PC-3 (cell line): ENCODE measurements at regions of chr3 and their contacts with region 1.

Region 1: DNA sequence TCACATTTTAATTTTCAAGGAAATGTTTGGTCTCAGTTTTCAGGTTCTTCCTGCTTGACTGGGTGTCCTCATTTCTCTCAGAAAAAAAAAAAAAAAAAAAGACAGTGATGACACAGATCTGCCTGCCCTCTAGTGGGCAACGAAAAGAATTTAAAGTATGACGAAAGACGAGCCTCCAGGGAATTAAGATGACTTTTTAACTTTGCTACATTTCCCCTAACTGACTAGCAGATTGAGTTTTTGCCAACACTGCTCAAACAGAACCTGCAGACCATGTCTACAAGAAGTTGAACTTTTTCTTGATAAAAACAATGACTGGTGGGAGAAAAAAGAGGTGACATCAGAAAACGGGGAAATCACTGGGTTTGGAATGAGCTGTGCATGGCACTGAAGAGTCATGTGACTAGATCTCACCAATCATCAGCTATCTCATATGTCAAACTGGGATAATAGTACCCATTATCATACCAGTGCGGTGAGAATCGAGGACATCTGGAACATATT is 40.8 kb downstream of the EOMES start:
- DNase-seq: peak; percentile 82
- ATAC-seq: peak; percentile 54
- H3K4me3 ChIP-seq: peak overlapping the region; percentile 58
- H3K27ac ChIP-seq: peak overlapping the region; percentile 21
- H3K4me1 ChIP-seq: peaks cover 34% of the 10 kb centered on the region
- H3K27me3 ChIP-seq: no peaks in the 10 kb centered on the region
- CTCF ChIP-seq: peak; percentile 91

Region 2: GRCh38 chr3:27134165-27134796 is 547.0 kb before region 1 on chr3:
- CTCF ChIA-PET with region 1: interaction called, 3 read pairs
- POLR2A ChIA-PET with region 1: no interaction called
- intact Hi-C with region 1: loop called (anchors 2 kb)
- DNase-seq: peak; percentile 82
- ATAC-seq: peak; percentile 93
- H3K4me3 ChIP-seq: no peak overlapping the region
- H3K27ac ChIP-seq: no peak overlapping the region
- H3K4me1 ChIP-seq: no peaks in the 10 kb centered on the region
- H3K27me3 ChIP-seq: peaks cover 18% of the 10 kb centered on the region
- CTCF ChIP-seq: peak; percentile 93

Region 3: DNA sequence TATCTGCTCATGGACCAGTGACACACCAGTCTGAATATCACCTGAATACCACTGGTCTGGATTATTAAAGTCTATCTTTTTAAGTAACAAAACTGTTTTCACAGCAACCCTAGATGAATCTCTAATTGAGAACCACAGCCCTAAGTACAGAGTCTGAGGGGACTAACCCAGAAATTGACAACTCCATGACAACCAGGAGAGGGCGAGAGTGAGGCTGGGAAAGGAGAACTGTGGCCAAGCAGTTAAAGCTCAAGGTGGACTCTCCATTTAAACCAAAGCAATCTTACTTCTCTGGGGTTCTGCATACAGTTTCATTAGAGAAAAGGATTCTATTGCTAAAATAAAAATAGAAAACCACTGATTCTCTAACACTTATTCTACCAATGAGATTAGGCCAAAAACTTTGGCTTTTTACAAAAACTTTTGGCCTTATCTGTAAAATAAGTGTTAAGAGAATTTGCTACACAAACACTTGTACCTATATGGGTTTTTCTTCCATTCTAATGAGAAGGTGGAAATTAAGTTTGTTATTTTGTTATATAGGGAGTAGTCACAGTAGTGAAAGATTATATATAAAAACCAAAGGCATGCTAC is 323.5 kb before region 1 on chr3:
- CTCF ChIA-PET with region 1: interaction called, 13 read pairs
- POLR2A ChIA-PET with region 1: no interaction called
- intact Hi-C with region 1: loop called (anchors 1 kb)
- DNase-seq: peak; percentile 83
- ATAC-seq: peak; percentile 90
- H3K4me3 ChIP-seq: no peak overlapping the region
- H3K27ac ChIP-seq: no peak overlapping the region
- H3K4me1 ChIP-seq: peaks cover 13% of the 10 kb centered on the region
- H3K27me3 ChIP-seq: no peaks in the 10 kb centered on the region
- CTCF ChIP-seq: peak; percentile 87

Region 4: DNA sequence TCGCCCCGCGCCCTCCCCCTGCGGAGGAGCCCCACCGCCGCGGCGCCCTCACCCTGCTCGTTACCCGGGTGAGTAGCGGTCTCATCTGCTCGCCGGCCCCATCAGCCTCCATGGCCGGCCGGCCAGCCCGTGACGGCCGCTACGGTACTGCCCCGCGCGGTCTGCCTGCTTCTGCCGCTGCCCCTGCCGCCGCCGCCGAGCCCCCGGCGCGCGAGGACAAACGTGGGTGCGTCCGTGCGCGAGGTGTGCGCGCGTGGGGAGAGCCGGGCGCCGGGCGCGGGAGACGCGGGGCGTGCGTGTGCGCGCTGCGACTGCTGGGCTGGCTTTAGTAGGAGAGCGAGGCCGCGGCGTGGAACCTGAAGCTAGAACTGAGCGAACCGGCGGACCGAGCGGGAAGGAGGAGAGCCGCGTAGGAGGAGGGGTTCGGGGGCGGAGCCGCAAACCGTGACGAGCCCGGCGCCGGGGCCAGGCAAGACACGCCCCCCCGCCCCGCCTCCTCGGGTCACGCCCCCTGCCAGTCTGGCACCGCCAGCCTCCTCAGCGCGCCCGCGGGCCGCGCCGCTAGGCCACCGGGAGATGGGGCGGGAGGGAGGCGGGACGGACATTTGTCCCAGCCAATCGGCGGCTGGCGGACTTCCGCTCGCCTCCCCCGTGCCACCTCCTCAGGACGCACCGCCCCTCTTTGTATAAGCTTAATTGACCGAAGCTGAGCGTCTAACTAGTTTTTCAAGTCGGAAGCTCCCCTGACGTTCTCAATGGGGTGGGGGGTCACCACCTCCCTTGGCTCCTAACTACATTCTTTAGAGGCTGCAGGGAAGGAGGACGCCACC is 197.1 kb before region 1 on chr3 and contains the start of gene SLC4A7:
- CTCF ChIA-PET with region 1: interaction called, 3 read pairs
- POLR2A ChIA-PET with region 1: no interaction called
- intact Hi-C with region 1: loop called (anchors 1 kb)
- DNase-seq: peak; percentile 97
- ATAC-seq: peak; percentile 85
- H3K4me3 ChIP-seq: peak within 1 kb of the TSS; percentile 88
- H3K27ac ChIP-seq: peak within 1 kb of the TSS; percentile 59
- H3K4me1 ChIP-seq: peaks cover 33% of the 10 kb centered on the region
- H3K27me3 ChIP-seq: no peaks in the 10 kb centered on the region
- CTCF ChIP-seq: no peak
- total RNA-seq, gene SLC4A7: 56.0 and 59.7 TPM in 2 replicates

Region 5: DNA sequence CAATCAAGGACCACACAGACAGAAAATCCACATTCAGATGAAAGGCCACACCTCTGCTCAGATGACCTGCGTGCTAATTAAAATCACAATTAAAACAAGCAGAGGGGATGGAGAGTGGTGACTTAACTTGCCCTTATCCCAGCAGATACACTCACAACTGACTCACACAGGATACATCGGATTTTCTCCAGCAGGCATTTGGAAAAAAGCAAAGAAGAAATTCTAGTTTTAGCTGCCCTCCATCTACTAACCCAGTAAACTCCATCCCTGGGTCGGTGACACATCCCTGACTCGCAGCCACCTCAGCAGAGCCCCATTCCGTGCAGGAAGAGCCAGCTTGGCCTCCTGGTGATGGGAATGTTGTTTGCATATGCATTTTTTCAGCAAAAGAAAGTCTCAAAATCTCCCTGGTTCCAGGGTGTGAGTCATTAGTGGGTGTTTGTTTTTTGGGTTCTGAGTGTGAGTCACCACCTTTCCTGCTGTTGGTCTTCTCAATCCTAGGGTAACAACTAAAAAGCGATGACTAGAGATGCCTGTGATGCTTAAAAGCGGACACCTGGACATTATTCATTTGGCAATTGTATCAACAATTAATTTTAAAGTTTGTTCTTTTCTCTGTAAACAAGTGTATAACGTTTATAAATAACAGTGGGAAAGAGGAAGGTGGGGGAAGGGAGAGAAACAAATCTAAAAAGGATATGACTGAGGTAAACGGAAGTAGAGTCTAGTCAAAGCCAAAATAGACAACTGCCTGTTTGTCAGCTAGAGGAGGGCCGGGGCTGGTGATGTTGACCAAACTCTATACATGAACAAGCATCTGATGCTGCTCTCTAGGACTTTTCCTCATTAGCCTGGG is 147.4 kb before region 1 on chr3:
- CTCF ChIA-PET with region 1: interaction called, 7 read pairs
- POLR2A ChIA-PET with region 1: interaction called, 9 read pairs
- intact Hi-C with region 1: loop called (anchors 1 kb)
- DNase-seq: peak; percentile 99
- ATAC-seq: peak; percentile 85
- H3K4me3 ChIP-seq: peak overlapping the region; percentile 34; the same call in 1 of the 2 replicates
- H3K27ac ChIP-seq: peak overlapping the region; percentile 97
- H3K4me1 ChIP-seq: peaks cover 41% of the 10 kb centered on the region
- H3K27me3 ChIP-seq: no peaks in the 10 kb centered on the region
- CTCF ChIP-seq: peak; percentile 42; the same call in 1 of the 2 replicates

Region 6: DNA sequence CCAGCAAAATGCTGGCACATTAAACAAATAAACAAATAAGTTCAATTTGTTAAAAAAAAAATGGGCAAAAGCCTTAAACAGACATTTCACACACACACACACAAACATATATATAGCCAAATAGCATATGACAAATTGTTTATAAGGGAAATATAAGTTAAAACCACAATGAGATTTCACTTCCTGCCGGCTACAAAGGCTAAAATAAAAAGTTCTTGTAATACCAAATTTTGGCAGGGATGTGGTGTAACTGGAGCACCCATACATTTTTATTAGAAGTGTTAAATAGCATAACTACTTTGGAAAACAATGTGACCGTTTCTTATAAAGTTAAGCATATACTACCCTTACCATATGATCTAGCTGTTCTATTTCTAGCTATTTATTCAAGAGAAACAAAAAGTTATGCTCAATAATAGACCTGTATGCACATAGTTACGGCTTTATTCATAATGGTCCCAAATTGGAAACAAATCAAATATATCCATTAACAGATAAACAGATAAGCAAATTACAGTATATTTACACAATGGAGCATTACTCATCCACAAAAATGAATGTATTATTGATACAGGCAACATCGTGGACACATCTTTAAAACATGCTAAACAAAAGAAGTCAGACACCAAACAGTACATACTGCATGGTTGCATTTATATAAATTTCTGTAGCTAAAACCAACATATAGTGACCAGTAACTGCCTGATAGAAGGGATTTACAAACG is 53.1 kb before region 1 on chr3:
- CTCF ChIA-PET with region 1: interaction called, 7 read pairs
- POLR2A ChIA-PET with region 1: interaction called, 3 read pairs
- intact Hi-C with region 1: loop called (anchors 2 kb)
- DNase-seq: peak; percentile 91
- ATAC-seq: peak; percentile 69
- H3K4me3 ChIP-seq: 0 out of 2 replicates have a peak overlapping the region, but pooled peaks have one; percentile 0
- H3K27ac ChIP-seq: peak overlapping the region; percentile 80
- H3K4me1 ChIP-seq: peaks cover 66% of the 10 kb centered on the region
- H3K27me3 ChIP-seq: no peaks in the 10 kb centered on the region
- CTCF ChIP-seq: no peak

Region 7: GRCh38 chr3:27699067-27699466 is 17.8 kb after region 1 on chr3:
- CTCF ChIA-PET with region 1: no interaction called
- POLR2A ChIA-PET with region 1: no interaction called
- intact Hi-C with region 1: no loop called
- DNase-seq: no peak
- ATAC-seq: no peak
- H3K4me3 ChIP-seq: no peak overlapping the region
- H3K27ac ChIP-seq: no peak overlapping the region
- H3K4me1 ChIP-seq: peaks cover 7% of the 10 kb centered on the region; the same call in 1 of the 2 replicates
- H3K27me3 ChIP-seq: no peaks in the 10 kb centered on the region
- CTCF ChIP-seq: no peak

Region 8: GRCh38 chr3:27752926-27753325 is 71.6 kb after region 1 on chr3:
- CTCF ChIA-PET with region 1: no interaction called
- POLR2A ChIA-PET with region 1: no interaction called
- intact Hi-C with region 1: no loop called
- DNase-seq: no peak
- ATAC-seq: no peak
- H3K4me3 ChIP-seq: no peak overlapping the region
- H3K27ac ChIP-seq: no peak overlapping the region
- H3K4me1 ChIP-seq: peaks cover 10% of the 10 kb centered on the region; the same call in 1 of the 2 replicates
- H3K27me3 ChIP-seq: no peaks in the 10 kb centered on the region
- CTCF ChIP-seq: no peak

Region 9: GRCh38 chr3:29202378-29202777 is 1521.1 kb after region 1 on chr3:
- CTCF ChIA-PET with region 1: interaction called, 16 read pairs
- POLR2A ChIA-PET with region 1: no interaction called
- intact Hi-C with region 1: no loop called
- DNase-seq: peak; percentile 84
- ATAC-seq: peak; percentile 88
- H3K4me3 ChIP-seq: no peak overlapping the region
- H3K27ac ChIP-seq: peak overlapping the region; percentile 21
- H3K4me1 ChIP-seq: peaks cover 24% of the 10 kb centered on the region
- H3K27me3 ChIP-seq: no peaks in the 10 kb centered on the region
- CTCF ChIP-seq: no peak